ENCODE measurements at regions of chr12 and their contacts with region 1.

Region 1: DNA sequence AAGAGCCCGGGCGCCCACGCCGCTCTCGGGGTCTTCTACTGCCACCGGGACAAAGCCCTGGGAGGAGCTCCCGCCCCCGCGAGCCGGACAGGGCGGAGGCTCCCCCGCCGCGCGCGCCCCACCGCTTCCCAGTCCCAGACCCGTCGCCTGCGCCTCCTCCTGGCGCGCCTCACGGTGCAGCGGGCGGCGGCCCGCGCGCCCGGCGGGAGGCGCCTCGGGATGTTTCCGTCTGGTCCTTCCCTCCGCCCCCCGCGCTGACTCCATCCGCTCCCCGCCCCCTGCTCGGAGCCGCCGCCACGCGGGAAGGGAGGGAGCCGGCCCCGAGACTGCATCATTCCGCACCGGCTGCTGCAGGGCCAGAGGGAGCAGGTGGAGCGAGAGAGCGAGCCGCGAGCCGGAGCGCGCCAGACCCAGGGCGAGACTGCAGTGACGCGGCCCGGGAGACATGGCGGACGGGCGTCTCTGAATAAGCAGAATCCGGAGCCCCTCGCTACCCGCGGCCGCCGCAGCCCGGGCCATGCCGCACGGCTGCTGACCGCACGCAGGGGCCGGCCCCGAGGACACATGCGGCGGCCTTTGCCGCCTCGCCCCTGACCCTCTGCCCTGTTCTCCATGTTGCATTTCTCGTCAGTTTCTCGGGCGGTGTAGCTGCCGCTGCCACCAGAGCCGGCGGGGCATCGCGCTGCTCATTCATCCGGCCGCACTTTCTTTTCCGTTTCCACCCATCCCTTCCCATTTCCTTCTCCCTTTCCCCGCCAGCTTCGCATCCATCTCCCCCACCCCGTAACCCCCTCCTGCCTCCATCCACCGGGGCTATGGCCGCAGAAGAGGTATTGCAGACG is at the start of gene BICD1:
- DNase-seq: peak; percentile 95
- H3K4me3 ChIP-seq: peak within 1 kb of the TSS; percentile 75 to 98 (median 80)
- H3K27ac ChIP-seq: peak within 1 kb of the TSS; percentile 92 to 98 (median 96)
- H3K4me1 ChIP-seq: peaks cover 0 to 31% (median 23%) of the 10 kb centered on the region in 4 donors
- H3K27me3 ChIP-seq: no peaks in the 10 kb centered on the region
- CTCF ChIP-seq: peak in 1 of 4 experiments; percentile 38
- EP300 ChIP-seq: no peak
- POLR2A ChIP-seq: peak in 1 of 2 donors; percentile 73
- total RNA-seq, gene BICD1: 9.4 to 16.0 (median 12.0) TPM

Region 2: DNA sequence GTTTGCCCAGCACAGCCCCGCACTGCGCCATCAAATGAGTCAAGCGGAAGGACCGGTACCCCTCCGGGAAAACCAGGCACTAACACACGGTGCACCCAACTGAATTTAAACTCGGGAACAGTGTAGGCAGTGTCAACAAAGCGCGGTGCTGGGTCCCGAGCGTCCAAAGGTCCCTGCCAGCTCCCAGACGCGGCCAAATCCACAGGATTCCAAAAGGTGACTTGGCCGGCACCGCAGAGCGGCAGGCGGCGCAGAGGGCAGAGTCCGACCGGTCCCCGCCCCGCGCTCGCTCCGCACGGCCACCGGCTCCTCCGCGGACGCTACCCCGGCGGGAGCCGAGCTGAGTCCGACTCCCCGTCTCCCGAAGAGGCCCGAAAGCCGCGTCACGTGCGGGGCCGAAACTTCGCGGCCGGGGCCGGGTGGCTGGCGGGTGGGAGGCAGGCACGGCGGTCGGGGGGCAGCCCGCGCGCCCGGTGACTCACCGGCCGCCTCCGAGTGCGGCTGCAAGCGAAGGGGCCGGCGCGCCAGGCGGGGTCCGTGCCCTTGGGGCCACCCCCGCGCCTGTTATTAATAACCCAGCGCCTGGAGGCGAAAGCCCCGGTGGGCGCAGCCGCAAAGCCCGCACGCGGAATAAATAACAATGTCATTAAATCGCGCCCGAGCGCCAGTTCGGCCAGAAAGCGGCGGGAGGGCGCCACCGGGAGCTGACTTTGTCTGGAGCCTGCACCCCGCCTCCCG is 516.7 kb before region 1 on chr12:
- intact Hi-C with region 1: loop called (anchors 5 kb)
- DNase-seq: peak; percentile 84
- H3K4me3 ChIP-seq: peak overlapping the region; percentile 61 to 97 (median 94)
- H3K27ac ChIP-seq: peak overlapping the region; percentile 96 to 99 (median 98)
- H3K4me1 ChIP-seq: peaks cover 0 to 36% (median 14%) of the 10 kb centered on the region in 4 donors
- H3K27me3 ChIP-seq: no peaks in the 10 kb centered on the region
- CTCF ChIP-seq: no peak
- EP300 ChIP-seq: no peak
- POLR2A ChIP-seq: no peak

Region 3: GRCh38 chr12:31650927-31651326 is 455.8 kb before region 1 on chr12:
- intact Hi-C with region 1: loop called (anchors 5 kb)
- DNase-seq: no peak
- H3K4me3 ChIP-seq: peak overlapping the region in 2 of 4 donors; percentile 41 to 43
- H3K27ac ChIP-seq: peak overlapping the region in 1 of 4 donors; percentile 72
- H3K4me1 ChIP-seq: peaks cover 0 to 12% (median 8%) of the 10 kb centered on the region in 4 donors
- H3K27me3 ChIP-seq: no peaks in the 10 kb centered on the region
- CTCF ChIP-seq: no peak
- EP300 ChIP-seq: peak in 1 of 4 donors; percentile 50
- POLR2A ChIP-seq: no peak

Region 4: GRCh38 chr12:31959161-31959700 is 147.5 kb before region 1 on chr12 and contains the start of gene RESF1:
- intact Hi-C with region 1: loop called (anchors 5 kb)
- DNase-seq: peak; percentile 91
- H3K4me3 ChIP-seq: peak within 1 kb of the TSS; percentile 67 to 79 (median 72)
- H3K27ac ChIP-seq: peak within 1 kb of the TSS; percentile 92 to 97 (median 94)
- H3K4me1 ChIP-seq: peaks cover 0 to 36% (median 24%) of the 10 kb centered on the region in 4 donors
- H3K27me3 ChIP-seq: no peaks in the 10 kb centered on the region
- CTCF ChIP-seq: no peak
- EP300 ChIP-seq: no peak
- POLR2A ChIP-seq: peak; percentile 40 to 62
- total RNA-seq, gene RESF1: 33.5 to 49.4 (median 41.2) TPM

Region 5: DNA sequence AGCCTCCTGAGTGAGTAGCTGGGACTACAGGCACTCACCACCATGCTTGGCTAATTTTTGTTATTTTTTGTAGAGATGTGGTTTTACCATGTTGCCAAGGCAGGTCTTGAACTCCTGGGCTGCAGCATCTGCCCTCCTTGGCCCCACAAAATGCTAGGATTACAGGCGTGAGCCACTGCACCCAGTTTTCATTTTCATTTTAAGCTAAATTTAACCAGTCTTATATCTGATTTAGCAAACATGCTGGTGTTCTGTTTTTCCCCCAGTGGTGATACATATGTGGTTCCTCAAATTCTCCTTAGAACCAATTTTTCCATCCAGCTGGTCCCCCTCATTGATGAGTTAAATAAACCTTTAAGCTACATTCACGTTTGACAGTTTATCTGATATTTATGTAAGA is 43.9 kb before region 1 on chr12:
- intact Hi-C with region 1: loop called (anchors 5 kb)
- DNase-seq: no peak
- H3K4me3 ChIP-seq: no peak overlapping the region
- H3K27ac ChIP-seq: no peak overlapping the region
- H3K4me1 ChIP-seq: no peaks in the 10 kb centered on the region
- H3K27me3 ChIP-seq: no peaks in the 10 kb centered on the region
- CTCF ChIP-seq: no peak
- EP300 ChIP-seq: no peak
- POLR2A ChIP-seq: no peak

Region 6: GRCh38 chr12:32146074-32146873 is 39.5 kb after region 1 on chr12:
- intact Hi-C with region 1: no loop called
- DNase-seq: no peak
- H3K4me3 ChIP-seq: no peak overlapping the region
- H3K27ac ChIP-seq: no peak overlapping the region
- H3K4me1 ChIP-seq: peaks cover 0 to 6% (median 2%) of the 10 kb centered on the region in 4 donors
- H3K27me3 ChIP-seq: no peaks in the 10 kb centered on the region
- CTCF ChIP-seq: no peak
- EP300 ChIP-seq: no peak
- POLR2A ChIP-seq: no peak